ENCODE measurements at regions of chr3 and their contacts with region 1.

Region 1: GRCh38 chr3:79361748-79362378 is 405.9 kb downstream of the ROBO1 start:
- DNase-seq: no peak
- H3K4me3 ChIP-seq: no peak overlapping the region
- H3K27ac ChIP-seq: no peak overlapping the region
- H3K4me1 ChIP-seq: no peaks in the 10 kb centered on the region
- H3K27me3 ChIP-seq: no peaks in the 10 kb centered on the region
- CTCF ChIP-seq: peak in 2 of 3 experiments; percentile 55 to 60

Region 2: GRCh38 chr3:78666470-78666800 is 695.4 kb before region 1 on chr3:
- intact Hi-C with region 1: loop called (anchors 10 kb)
- DNase-seq: no peak
- H3K4me3 ChIP-seq: no peak overlapping the region
- H3K27ac ChIP-seq: no peak overlapping the region
- H3K4me1 ChIP-seq: no peaks in the 10 kb centered on the region
- H3K27me3 ChIP-seq: no peaks in the 10 kb centered on the region
- CTCF ChIP-seq: no peak

Region 3: DNA sequence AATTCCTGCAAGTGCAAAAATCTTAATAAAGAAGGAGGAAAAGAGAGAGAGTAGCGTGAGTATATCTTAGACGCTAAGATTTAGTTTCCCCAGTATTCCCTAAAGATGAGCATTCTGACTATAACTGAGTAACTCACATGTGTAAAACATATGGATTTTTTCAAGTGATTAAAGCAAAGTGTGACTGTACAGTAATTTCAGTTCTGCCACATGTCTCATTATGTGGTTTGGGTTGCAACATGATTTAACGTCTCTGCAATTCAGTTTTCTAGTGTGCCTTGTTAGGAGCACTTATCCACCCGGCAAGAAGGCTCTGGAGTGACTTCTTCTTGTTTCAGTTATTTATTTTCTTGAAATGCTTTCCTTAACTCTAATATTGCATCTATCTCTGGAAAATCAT is 108.2 kb before region 1 on chr3:
- intact Hi-C with region 1: no loop called
- DNase-seq: no peak
- H3K4me3 ChIP-seq: no peak overlapping the region
- H3K27ac ChIP-seq: no peak overlapping the region
- H3K4me1 ChIP-seq: no peaks in the 10 kb centered on the region
- H3K27me3 ChIP-seq: no peaks in the 10 kb centered on the region
- CTCF ChIP-seq: no peak